ENCODE measurements at regions of chr17 and their contacts with region 1.

Region 1: GRCh38 chr17:64964796-64965195 is 45.5 kb upstream of the LRRC37A3 start:
- DNase-seq: no peak
- H3K4me3 ChIP-seq: no peak overlapping the region
- H3K27ac ChIP-seq: peak overlapping the region; percentile 73 to 81 (median 79)
- H3K4me1 ChIP-seq: peaks cover 0 to 38% (median 24%) of the 10 kb centered on the region in 4 donors
- H3K27me3 ChIP-seq: no peaks in the 10 kb centered on the region
- CTCF ChIP-seq: no peak
- EP300 ChIP-seq: no peak
- POLR2A ChIP-seq: no peak

Region 2: GRCh38 chr17:64778240-64779097 is 186.3 kb before region 1 on chr17:
- intact Hi-C with region 1: loop called (anchors 5 kb)
- DNase-seq: peak; percentile 67
- H3K4me3 ChIP-seq: peak overlapping the region in 3 of 4 donors; percentile 4 to 39 (median 37)
- H3K27ac ChIP-seq: peak overlapping the region in 1 of 4 donors; percentile 37
- H3K4me1 ChIP-seq: peaks cover 0 to 62% (median 59%) of the 10 kb centered on the region in 4 donors
- H3K27me3 ChIP-seq: peaks cover 41 to 58% (median 50%) of the 10 kb centered on the region in 3 donors
- CTCF ChIP-seq: no peak
- EP300 ChIP-seq: no peak
- POLR2A ChIP-seq: no peak

Region 3: DNA sequence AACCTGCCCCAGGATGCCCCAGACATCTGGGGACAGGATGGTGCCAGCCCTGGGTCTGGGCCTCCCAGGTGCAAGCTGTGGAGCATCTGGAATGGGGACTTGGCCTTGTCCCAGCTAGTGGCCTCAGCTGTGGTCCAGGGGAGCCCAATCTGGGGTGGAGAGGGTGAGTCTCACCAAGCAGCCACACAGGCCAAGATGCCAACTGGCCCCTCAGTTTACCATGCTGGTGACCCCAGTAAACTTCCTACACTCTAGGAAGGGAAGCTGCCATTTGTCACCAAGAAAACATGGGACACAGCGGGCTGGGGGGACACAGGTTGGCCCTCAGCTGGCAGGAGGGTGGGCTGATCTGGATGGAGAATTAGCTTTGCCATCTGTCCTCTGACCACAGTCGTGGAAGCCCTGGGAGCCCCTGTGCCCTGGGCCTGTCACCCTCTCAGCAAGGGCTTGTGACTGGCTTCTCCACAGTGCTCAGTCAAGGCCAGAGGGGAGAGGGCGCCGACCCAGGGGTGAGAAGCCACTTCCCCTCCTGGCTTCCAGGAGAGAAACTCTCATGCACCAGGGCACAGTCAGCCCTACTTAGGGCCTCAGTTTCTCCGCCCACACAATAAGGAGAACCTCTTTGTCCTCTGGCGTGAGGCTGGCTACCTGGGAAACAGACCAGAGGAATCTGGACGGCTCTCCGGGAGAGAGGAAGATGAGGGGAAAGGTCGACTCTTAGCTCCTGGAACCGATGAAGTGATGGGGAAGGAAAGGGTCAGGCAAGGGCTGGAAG is 176.3 kb before region 1 on chr17:
- intact Hi-C with region 1: no loop called
- DNase-seq: peak; percentile 59
- H3K4me3 ChIP-seq: no peak overlapping the region
- H3K27ac ChIP-seq: no peak overlapping the region
- H3K4me1 ChIP-seq: no peaks in the 10 kb centered on the region
- H3K27me3 ChIP-seq: peaks cover 4 to 44% (median 26%) of the 10 kb centered on the region in 3 donors
- CTCF ChIP-seq: no peak
- EP300 ChIP-seq: no peak
- POLR2A ChIP-seq: no peak

Region 4: GRCh38 chr17:64920026-64920418 is 44.8 kb before region 1 on chr17:
- intact Hi-C with region 1: loop called (anchors 2 kb)
- DNase-seq: no peak
- H3K4me3 ChIP-seq: peak overlapping the region; percentile 69 to 99 (median 82)
- H3K27ac ChIP-seq: peak overlapping the region; percentile 91 to 99 (median 94)
- H3K4me1 ChIP-seq: peaks cover 0 to 12% (median 3%) of the 10 kb centered on the region in 4 donors
- H3K27me3 ChIP-seq: no peaks in the 10 kb centered on the region
- CTCF ChIP-seq: no peak
- EP300 ChIP-seq: no peak
- POLR2A ChIP-seq: no peak

Measured in sigmoid colon (tissue), 7 donors.